ENCODE measurements at regions of chr10 and their contacts with region 1.

Region 1: GRCh38 chr10:48476279-48476982 is 128.4 kb downstream of the ARHGAP22 start:
- DNase-seq: no peak
- ATAC-seq: no peak
- H3K4me3 ChIP-seq: no peak overlapping the region
- H3K27ac ChIP-seq: no peak overlapping the region
- H3K4me1 ChIP-seq: peaks cover 0 to 12% (median 0%) of the 10 kb centered on the region in 9 donors
- H3K27me3 ChIP-seq: no peaks in the 10 kb centered on the region
- CTCF ChIP-seq: no peak

Region 2: GRCh38 chr10:48377751-48378535 is 98.5 kb before region 1 on chr10:
- intact Hi-C with region 1: loop called in 1 of 10 experiments (anchors 5 kb)
- DNase-seq: no peak
- ATAC-seq: no peak
- H3K4me3 ChIP-seq: no peak overlapping the region
- H3K27ac ChIP-seq: no peak overlapping the region
- H3K4me1 ChIP-seq: peaks cover 0 to 13% (median 0%) of the 10 kb centered on the region in 9 donors
- H3K27me3 ChIP-seq: no peaks in the 10 kb centered on the region
- CTCF ChIP-seq: no peak

Region 3: DNA sequence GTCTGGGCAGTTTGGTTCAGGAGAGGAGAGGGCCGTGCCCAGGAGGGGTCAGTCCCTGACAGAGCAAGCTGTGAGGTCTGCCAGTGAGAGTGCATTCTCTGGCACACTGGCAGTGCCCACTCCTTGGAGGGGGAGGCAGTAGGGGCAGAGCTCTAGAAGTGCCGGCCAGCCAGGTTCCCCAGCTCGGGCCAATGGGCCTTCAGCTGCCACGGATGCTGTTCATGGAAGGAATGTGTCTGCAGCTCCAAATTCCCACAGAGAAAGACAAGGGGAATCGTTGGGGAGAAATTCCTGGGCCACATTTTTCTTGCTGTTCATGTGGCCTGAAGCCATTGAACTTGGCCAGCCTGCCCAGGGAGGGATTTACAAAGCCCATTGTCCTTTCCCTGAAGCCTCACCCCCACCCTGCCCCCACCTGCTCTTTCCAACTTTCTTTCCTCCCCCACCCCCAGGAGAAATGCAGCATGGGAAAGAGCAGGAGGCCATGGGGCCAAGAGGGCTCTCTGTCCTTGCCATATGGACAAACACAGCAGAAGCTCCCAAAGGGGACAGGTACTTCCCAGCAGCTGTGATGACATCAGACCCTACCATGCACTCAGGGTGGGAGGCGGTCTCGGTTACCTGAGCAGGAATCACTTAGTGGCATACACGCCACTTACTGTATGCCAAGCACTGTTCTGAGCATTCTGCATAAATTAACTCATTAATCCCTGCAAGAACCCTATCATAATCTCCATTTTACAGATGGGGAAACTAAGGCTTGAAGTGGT is 57.7 kb after region 1 on chr10:
- intact Hi-C with region 1: loop called in 1 of 10 experiments (anchors 10 kb)
- DNase-seq: no peak
- ATAC-seq: peak in 4 of 8 donors; percentile 22 to 62 (median 54)
- H3K4me3 ChIP-seq: no peak overlapping the region
- H3K27ac ChIP-seq: no peak overlapping the region
- H3K4me1 ChIP-seq: peaks cover 0 to 8% (median 0%) of the 10 kb centered on the region in 9 donors
- H3K27me3 ChIP-seq: no peaks in the 10 kb centered on the region
- CTCF ChIP-seq: no peak

Region 4: DNA sequence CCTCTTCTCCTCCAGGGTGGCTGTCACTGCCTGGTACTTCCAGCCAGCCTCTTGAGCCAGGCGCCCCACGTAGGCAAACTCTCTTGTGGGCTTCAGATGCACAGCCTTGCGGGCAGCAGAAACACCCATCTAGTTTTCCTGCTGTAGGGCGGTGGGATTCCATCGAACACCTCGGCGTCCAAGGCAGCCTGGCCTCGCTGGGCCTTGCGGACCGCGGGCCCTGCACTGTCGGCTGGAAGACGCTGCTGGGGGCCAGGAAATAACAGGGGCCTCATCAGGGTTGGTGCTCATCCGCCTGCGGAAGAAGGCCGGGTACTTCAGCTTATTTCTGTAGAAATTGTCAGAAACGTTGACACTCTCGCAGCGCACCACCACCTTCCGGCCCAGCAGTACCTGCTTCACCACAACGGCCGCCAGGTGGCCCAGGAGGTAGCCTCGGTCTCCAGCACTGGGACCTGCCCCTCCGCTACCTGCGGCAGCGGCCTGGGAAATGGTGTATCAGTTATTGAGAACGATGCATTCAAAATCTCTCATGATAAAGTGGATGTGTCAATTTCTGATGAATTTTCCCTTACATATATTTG is 269.3 kb after region 1 on chr10:
- intact Hi-C with region 1: no loop called
- DNase-seq: no peak
- ATAC-seq: no peak
- H3K4me3 ChIP-seq: no peak overlapping the region
- H3K27ac ChIP-seq: no peak overlapping the region
- H3K4me1 ChIP-seq: peaks cover 0 to 16% (median 10%) of the 10 kb centered on the region in 9 donors
- H3K27me3 ChIP-seq: no peaks in the 10 kb centered on the region
- CTCF ChIP-seq: no peak